ENCODE measurements at regions of chr17 and their contacts with region 1.

Region 1: DNA sequence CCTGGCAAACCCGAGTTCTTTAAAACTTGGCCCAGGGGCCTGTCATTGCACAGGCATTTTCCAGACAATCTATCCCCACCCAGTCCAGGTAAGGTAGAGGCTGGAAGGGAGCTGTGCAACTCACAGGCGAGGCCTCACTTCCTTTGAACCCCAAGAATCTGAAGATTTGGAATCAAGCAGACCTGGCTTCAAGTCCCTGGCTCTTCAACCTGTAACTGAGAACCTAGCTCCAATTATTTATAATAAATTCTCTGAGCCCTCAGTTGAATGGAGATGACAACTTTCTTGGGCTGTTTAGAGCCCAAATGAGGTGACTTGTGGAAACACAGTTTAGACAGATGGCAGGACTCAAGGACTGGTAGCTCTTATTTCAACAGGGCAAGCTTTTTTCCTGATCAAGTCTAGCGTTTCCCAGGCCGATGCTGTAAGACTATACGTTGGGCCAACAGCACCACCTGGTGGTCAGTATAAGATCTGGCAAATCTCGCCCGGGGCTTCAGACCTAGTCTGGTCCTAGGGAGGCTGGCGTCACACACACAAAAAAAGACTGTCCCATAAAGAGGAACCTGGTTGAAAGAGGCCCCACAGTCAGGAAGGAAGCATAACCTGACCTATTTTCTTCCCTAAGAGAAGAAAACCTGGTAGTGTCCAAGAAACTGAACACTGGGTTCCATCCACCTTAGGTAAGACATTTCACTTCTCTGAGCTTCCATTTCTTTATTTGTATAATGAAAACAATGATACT is 117.9 kb downstream of the C17orf67 start:
- DNase-seq: peak; percentile 84
- ATAC-seq: peak; percentile 92
- H3K4me3 Mint-ChIP-seq: no peak overlapping the region
- H3K27ac Mint-ChIP-seq: no peak overlapping the region
- H3K4me1 Mint-ChIP-seq: no peaks in the 10 kb centered on the region
- H3K27me3 Mint-ChIP-seq: no peaks in the 10 kb centered on the region

Region 2: DNA sequence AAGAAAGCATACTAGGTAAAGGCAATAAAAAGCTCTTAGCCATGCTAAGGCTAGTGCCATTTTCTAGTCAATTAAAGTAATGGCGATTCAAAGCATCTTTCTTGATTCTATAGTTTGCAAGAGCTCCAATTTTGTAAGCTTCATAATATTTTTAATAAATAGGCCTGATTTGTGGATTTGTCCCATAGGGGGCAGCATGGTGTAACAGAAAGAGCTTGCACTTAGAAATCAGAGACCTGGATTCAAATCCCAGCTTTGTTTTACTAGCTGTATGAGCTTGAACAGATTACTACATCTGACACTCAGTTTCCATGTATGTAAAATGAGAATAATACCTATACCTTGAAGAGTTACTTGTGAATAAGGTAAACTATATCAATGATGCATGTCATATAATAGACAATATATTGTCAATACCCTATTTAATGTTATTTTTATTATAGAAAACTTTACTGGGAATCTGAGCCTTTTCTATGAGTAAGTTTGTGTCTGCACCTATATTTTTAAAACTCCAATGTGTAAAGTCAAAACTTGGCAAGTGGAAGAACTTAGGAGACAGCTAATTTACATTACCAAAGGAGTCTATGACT is 215.9 kb before region 1 on chr17:
- CTCF ChIA-PET with region 1: interaction called, 40 read pairs
- POLR2A ChIA-PET with region 1: no interaction called
- DNase-seq: no peak
- ATAC-seq: no peak
- H3K4me3 Mint-ChIP-seq: no peak overlapping the region
- H3K27ac Mint-ChIP-seq: no peak overlapping the region
- H3K4me1 Mint-ChIP-seq: no peaks in the 10 kb centered on the region
- H3K27me3 Mint-ChIP-seq: peaks cover 11% of the 10 kb centered on the region

Region 3: DNA sequence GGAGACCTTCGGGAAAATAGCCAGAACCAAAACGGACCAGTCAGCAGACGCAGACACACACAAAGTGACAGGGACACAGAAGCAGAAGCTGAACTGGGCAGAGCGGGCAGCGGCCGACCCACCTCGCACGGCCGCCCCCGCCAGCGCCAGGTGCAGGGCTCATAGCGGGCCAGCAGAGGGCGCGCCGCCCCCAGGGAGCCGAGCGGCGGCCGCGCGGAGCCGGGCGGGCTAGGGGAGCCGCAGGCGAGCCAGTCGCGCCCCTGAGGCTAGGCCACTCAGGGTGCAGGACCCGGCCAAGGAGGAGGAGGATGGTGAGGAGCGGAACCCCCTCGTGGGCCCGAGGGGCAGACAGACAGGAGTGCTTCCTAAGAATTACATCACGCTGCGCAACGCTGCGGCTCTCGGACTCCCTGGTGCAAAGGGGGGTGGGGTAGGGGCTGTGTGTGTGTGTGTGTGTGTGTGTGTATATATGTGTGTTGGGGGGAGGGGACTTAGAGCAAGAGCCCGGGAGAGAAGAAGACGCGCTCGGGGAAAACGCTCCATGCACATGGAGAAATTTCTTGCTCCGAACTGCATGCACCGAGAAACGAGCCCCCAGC is 123.2 kb before region 1 on chr17:
- CTCF ChIA-PET with region 1: interaction called, 70 read pairs
- POLR2A ChIA-PET with region 1: no interaction called
- DNase-seq: peak; percentile 66
- ATAC-seq: peak; percentile 70
- H3K4me3 Mint-ChIP-seq: peak overlapping the region; percentile 36
- H3K27ac Mint-ChIP-seq: no peak overlapping the region
- H3K4me1 Mint-ChIP-seq: peaks cover 27% of the 10 kb centered on the region
- H3K27me3 Mint-ChIP-seq: peaks cover 50% of the 10 kb centered on the region

Region 4: DNA sequence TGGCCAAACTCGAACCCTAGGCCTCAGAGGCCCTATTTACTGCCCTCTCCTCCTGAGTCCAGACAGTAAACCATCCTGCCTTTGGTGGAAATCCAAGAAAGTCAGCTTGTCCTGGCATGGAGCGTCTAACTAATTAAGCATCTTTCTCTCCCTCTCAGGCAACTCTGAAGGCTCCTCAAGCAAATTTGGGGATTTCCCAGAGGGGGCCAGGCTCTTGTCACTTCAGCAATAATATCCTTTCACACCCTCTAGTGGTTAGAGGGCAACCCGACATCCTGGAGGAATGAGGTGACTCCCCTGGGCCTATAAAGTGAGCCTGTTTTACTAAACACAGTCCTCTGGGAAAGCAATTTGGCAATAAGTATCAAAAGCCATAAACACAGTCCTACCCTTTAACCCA is 61.9 kb before region 1 on chr17:
- CTCF ChIA-PET with region 1: interaction called, 18 read pairs
- POLR2A ChIA-PET with region 1: no interaction called
- DNase-seq: peak; percentile 60
- ATAC-seq: peak; percentile 89
- H3K4me3 Mint-ChIP-seq: no peak overlapping the region
- H3K27ac Mint-ChIP-seq: no peak overlapping the region
- H3K4me1 Mint-ChIP-seq: peaks cover 2% of the 10 kb centered on the region
- H3K27me3 Mint-ChIP-seq: peaks cover 17% of the 10 kb centered on the region

Region 5: GRCh38 chr17:56694825-56695224 is 21.0 kb before region 1 on chr17:
- CTCF ChIA-PET with region 1: interaction called, 20 read pairs
- POLR2A ChIA-PET with region 1: no interaction called
- DNase-seq: no peak
- ATAC-seq: no peak
- H3K4me3 Mint-ChIP-seq: no peak overlapping the region
- H3K27ac Mint-ChIP-seq: no peak overlapping the region
- H3K4me1 Mint-ChIP-seq: no peaks in the 10 kb centered on the region
- H3K27me3 Mint-ChIP-seq: peaks cover 13% of the 10 kb centered on the region

Region 6: DNA sequence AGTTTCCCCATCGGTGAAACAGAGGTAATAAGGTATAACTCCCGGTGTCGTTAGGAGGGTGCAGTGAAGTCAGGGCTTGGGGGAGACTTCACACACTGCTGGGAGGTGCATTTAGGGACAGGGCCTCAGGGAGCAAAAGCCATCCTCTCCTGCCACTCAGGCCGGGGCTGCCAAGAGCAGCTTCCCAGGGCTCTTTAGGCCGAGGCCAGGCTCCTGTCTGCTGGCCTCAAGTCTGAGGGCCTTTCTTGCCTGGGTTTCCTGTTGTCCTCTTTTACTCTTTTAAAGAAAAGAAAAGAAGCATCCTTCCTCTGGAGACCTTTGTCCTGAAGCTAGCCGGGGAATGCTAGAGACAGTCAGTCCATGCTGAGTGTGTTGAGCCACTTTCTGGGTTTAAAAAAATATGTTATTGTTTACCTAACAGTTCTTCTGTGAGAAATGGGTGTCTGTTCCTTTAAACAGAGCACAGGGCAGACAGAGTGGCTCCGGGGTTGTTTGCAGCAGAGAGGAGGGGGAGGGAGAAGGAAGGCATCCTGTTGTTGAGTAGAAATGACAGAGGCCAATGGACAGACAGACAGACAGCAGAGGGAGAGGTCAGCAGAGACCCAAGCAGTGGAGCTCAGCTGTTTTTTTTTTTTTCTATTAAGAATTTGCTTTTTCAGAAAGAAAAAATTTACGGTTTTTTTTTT is 38.9 kb after region 1 on chr17:
- CTCF ChIA-PET with region 1: interaction called, 11 read pairs
- POLR2A ChIA-PET with region 1: no interaction called
- DNase-seq: peak; percentile 33
- ATAC-seq: peak; percentile 42
- H3K4me3 Mint-ChIP-seq: no peak overlapping the region
- H3K27ac Mint-ChIP-seq: peak overlapping the region; percentile 15
- H3K4me1 Mint-ChIP-seq: peaks cover 14% of the 10 kb centered on the region
- H3K27me3 Mint-ChIP-seq: no peaks in the 10 kb centered on the region

Region 7: GRCh38 chr17:56779898-56780733 is 64.3 kb after region 1 on chr17:
- CTCF ChIA-PET with region 1: interaction called, 82 read pairs
- POLR2A ChIA-PET with region 1: interaction called, 5 read pairs
- DNase-seq: peak; percentile 89
- ATAC-seq: peak; percentile 97
- H3K4me3 Mint-ChIP-seq: peak overlapping the region; percentile 82
- H3K27ac Mint-ChIP-seq: peak overlapping the region; percentile 83
- H3K4me1 Mint-ChIP-seq: peaks cover 19% of the 10 kb centered on the region
- H3K27me3 Mint-ChIP-seq: peaks cover 19% of the 10 kb centered on the region

Region 8: GRCh38 chr17:56880133-56880532 is 164.3 kb after region 1 on chr17:
- CTCF ChIA-PET with region 1: no interaction called
- POLR2A ChIA-PET with region 1: no interaction called
- DNase-seq: no peak
- ATAC-seq: no peak
- H3K4me3 Mint-ChIP-seq: no peak overlapping the region
- H3K27ac Mint-ChIP-seq: no peak overlapping the region
- H3K4me1 Mint-ChIP-seq: no peaks in the 10 kb centered on the region
- H3K27me3 Mint-ChIP-seq: peaks cover 3% of the 10 kb centered on the region

Region 9: DNA sequence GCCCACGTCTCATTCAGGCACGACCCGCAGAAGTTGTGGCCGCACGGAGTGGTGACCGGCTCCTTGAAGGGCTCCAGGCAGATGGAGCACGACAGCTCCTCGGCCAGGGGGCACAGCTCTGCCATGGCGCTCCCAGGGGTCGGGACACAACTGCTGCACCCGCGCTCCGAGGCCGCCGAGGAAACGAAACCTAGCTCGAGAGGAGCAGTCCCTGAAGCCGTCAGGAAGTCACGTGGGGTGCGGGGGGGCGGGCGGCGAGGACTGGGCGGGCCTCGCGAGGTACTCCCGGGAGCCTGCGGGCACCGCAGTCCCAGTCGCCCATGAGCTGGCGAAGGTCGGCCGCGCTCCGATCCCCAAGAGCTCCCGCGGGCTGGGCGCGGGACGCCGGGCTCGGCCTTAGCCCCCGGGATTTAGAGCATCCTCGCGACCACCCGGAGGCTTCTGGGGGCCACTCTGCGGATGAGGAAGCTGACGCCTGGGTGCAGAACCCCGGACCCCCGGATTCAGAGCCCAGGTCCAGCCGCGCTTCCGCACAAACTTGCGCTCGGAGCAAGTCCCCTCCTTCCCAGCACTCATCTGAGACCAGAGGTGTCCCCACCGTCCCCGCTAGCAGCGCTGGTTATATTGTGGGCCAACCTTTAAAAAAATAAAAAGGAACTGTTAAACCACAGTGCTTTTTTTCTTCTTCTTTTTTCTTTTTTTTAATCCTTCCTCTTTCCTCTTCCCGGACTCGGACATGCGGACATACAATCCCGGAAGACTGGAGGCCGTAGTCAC is 198.3 kb after region 1 on chr17 and contains the start of gene TRIM25:
- CTCF ChIA-PET with region 1: no interaction called
- POLR2A ChIA-PET with region 1: no interaction called
- DNase-seq: peak; percentile 95
- ATAC-seq: peak; percentile 89
- H3K4me3 Mint-ChIP-seq: peak within 1 kb of the TSS; percentile 86
- H3K27ac Mint-ChIP-seq: peak within 1 kb of the TSS; percentile 96
- H3K4me1 Mint-ChIP-seq: peaks cover 44% of the 10 kb centered on the region
- H3K27me3 Mint-ChIP-seq: no peaks in the 10 kb centered on the region
- total RNA-seq, gene TRIM25: 131 to 142 TPM

Region 10: GRCh38 chr17:56960596-56961538 is 245.1 kb after region 1 on chr17 and contains the start of gene COIL:
- CTCF ChIA-PET with region 1: no interaction called
- POLR2A ChIA-PET with region 1: no interaction called
- DNase-seq: peak; percentile 95
- ATAC-seq: peak; percentile 100
- H3K4me3 Mint-ChIP-seq: peak within 1 kb of the TSS; percentile 83
- H3K27ac Mint-ChIP-seq: peak within 1 kb of the TSS; percentile 87
- H3K4me1 Mint-ChIP-seq: peaks cover 23% of the 10 kb centered on the region
- H3K27me3 Mint-ChIP-seq: no peaks in the 10 kb centered on the region
- total RNA-seq, gene COIL: 17.6 to 17.8 TPM